Activated CD4-positive, alpha-beta T cell treated with anti-CD3 and anti-CD28 coated beads, Interleukin-2, amount 10 ng/mL, durations not matched to agents 24 days and 14 days (primary cell): ENCODE measurements at regions of chr3 and their contacts with region 1.

Region 1: GRCh38 chr3:47867451-47868044 is 64.6 kb downstream of the DHX30 start:
- DNase-seq: no peak
- H3K4me3 Mint-ChIP-seq: no peak overlapping the region
- H3K27ac Mint-ChIP-seq: no peak overlapping the region
- H3K4me1 Mint-ChIP-seq: no peaks in the 10 kb centered on the region
- H3K27me3 Mint-ChIP-seq: no peaks in the 10 kb centered on the region

Region 2: GRCh38 chr3:47850564-47851410 is 16.8 kb before region 1 on chr3:
- intact Hi-C with region 1: loop called (anchors 1 kb)
- DNase-seq: no peak
- H3K4me3 Mint-ChIP-seq: no peak overlapping the region
- H3K27ac Mint-ChIP-seq: peak overlapping the region; percentile 32
- H3K4me1 Mint-ChIP-seq: no peaks in the 10 kb centered on the region
- H3K27me3 Mint-ChIP-seq: no peaks in the 10 kb centered on the region